H1 (cell line): ENCODE measurements at regions of chr5 and their contacts with region 1.

Region 1: DNA sequence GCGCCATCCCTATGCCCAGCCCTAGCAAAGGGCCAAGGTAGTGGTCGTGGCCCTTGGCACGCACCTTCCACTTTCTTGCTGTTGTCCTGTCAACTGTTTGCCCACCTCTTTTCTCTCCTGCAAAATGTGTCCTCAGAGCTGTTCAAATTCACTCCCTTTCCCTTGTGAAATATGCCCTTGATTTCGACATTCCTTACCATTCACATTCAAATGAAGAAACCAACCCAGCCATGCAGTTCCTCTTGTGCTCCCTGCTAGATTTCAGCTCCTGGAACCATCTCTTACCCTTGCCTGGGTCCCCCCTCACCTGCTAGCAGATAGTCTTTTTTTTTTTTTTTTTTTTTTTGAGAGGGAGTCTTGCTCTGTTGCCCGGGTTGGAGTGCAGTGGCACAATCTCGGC is 19.6 kb upstream of the HRH2 start:
- DNase-seq: no peak
- H3K4me3 ChIP-seq: no peak overlapping the region
- H3K27ac ChIP-seq: no peak overlapping the region
- H3K4me1 ChIP-seq: peaks cover 10 to 28% (median 12%) of the 10 kb centered on the region in 4 experiments
- H3K27me3 ChIP-seq: no peaks in the 10 kb centered on the region; a peak in 1 of 7 replicates
- CTCF ChIP-seq: no peak
- EP300 ChIP-seq: no peak
- POLR2A ChIP-seq: no peak
- RAD21 ChIP-seq: no peak

Region 2: GRCh38 chr5:175464074-175464941 is 174.0 kb before region 1 on chr5:
- CTCF ChIA-PET with region 1: no interaction called
- POLR2A ChIA-PET with region 1: no interaction called
- DNase-seq: peak in 1 of 2 experiments; percentile 87
- H3K4me3 ChIP-seq: no peak overlapping the region
- H3K27ac ChIP-seq: no peak overlapping the region
- H3K4me1 ChIP-seq: no peaks in the 10 kb centered on the region; a peak in 1 of 7 replicates
- H3K27me3 ChIP-seq: no peaks in the 10 kb centered on the region
- CTCF ChIP-seq: peak; percentile 63 to 87 (median 70)
- EP300 ChIP-seq: no peak
- POLR2A ChIP-seq: no peak
- RAD21 ChIP-seq: peak; percentile 68 to 81

Region 3: GRCh38 chr5:175623088-175623487 is 15.2 kb before region 1 on chr5:
- CTCF ChIA-PET with region 1: interaction called, 18 read pairs
- POLR2A ChIA-PET with region 1: no interaction called
- DNase-seq: no peak
- H3K4me3 ChIP-seq: no peak overlapping the region
- H3K27ac ChIP-seq: no peak overlapping the region
- H3K4me1 ChIP-seq: peaks cover 0 to 7% (median 3%) of the 10 kb centered on the region in 4 experiments; a peak in 4 of 7 replicates
- H3K27me3 ChIP-seq: no peaks in the 10 kb centered on the region
- CTCF ChIP-seq: no peak
- EP300 ChIP-seq: no peak
- POLR2A ChIP-seq: no peak
- RAD21 ChIP-seq: no peak

Region 4: GRCh38 chr5:175657593-175658271 is 19.4 kb after region 1 on chr5 and contains the start of gene HRH2:
- CTCF ChIA-PET with region 1: interaction called, 14 read pairs
- POLR2A ChIA-PET with region 1: interaction called, 5 read pairs
- DNase-seq: peak in 1 of 2 experiments; percentile 71
- H3K4me3 ChIP-seq: peak within 1 kb of the TSS; percentile 51 to 83 (median 80)
- H3K27ac ChIP-seq: no peak within 1 kb of the TSS
- H3K4me1 ChIP-seq: peaks cover 0 to 11% (median 2%) of the 10 kb centered on the region in 4 experiments; a peak in 5 of 7 replicates
- H3K27me3 ChIP-seq: peaks cover 0 to 6% (median 0%) of the 10 kb centered on the region in 4 experiments; a peak in 5 of 7 replicates
- CTCF ChIP-seq: no peak
- EP300 ChIP-seq: no peak
- POLR2A ChIP-seq: no peak
- RAD21 ChIP-seq: peak in 1 of 2 experiments; percentile 11; a peak in 1 of 4 replicates
- total RNA-seq, gene HRH2: 8.1 and 9.3 TPM in 2 replicates

Region 5: DNA sequence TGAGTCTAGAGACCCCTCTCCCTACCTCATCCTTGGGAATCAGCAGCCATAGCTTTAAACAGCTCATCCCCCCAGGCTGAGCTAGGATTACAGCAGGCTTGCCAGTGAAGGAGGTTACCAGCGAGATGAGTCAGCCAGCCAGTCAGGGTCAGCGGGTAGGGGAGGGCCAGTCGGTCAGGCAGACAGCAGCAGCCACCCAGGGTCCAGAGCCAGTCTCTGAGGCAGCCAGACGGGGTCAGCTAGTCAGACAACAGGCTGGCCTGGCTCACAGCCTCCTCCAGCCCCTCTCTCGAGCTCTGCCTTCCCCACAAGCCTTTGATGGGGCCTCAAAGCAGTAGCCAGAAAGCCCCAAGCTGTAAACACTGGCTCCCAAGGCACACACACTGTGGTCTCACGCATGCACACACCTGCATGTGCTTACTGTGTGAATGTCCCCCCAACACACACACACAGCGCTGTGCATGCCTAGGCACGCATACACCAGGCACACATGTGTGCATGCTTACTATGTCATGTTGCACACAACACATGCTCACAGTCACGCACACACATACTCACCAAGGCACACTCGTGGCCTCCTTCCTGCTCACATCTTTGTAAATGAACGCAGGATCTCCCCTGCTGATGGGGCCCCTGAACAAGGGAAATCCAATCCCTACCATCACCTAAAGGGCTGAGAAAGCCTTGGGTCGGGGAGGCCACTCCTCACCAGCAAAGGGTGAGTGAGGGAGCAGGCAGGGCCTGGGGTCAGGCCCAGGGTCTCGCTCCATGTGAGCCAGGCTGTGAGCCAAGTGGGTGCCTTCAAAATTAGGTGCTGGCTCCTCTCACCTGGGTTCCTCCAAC is 204.9 kb after region 1 on chr5:
- CTCF ChIA-PET with region 1: no interaction called
- POLR2A ChIA-PET with region 1: no interaction called
- DNase-seq: no peak
- H3K4me3 ChIP-seq: no peak overlapping the region
- H3K27ac ChIP-seq: 0 out of 2 replicates have a peak overlapping the region, but pooled peaks have one; percentile 27
- H3K4me1 ChIP-seq: peaks cover 0 to 18% (median 15%) of the 10 kb centered on the region in 4 experiments; a peak in 6 of 7 replicates
- H3K27me3 ChIP-seq: no peaks in the 10 kb centered on the region
- CTCF ChIP-seq: no peak
- EP300 ChIP-seq: no peak
- POLR2A ChIP-seq: no peak
- RAD21 ChIP-seq: no peak